Natural killer cell (primary cell): ENCODE measurements at regions of chr2 and their contacts with region 1.

Region 1: GRCh38 chr2:204177977-204178540 is 241.5 kb downstream of the ICOS start:
- DNase-seq: peak; percentile 41 to 77
- ATAC-seq: peak; percentile 49 to 73 (median 55)
- H3K4me3 ChIP-seq: no peak overlapping the region
- H3K4me3 Mint-ChIP-seq: no peak overlapping the region
- H3K27ac ChIP-seq: no peak overlapping the region
- H3K27ac Mint-ChIP-seq: no peak overlapping the region
- H3K4me1 ChIP-seq: no peaks in the 10 kb centered on the region
- H3K4me1 Mint-ChIP-seq: no peaks in the 10 kb centered on the region
- H3K27me3 ChIP-seq: no peaks in the 10 kb centered on the region
- H3K27me3 Mint-ChIP-seq: peaks cover 8 to 51% of the 10 kb centered on the region in 2 donors
- CTCF ChIP-seq: peak; percentile 75

Region 2: DNA sequence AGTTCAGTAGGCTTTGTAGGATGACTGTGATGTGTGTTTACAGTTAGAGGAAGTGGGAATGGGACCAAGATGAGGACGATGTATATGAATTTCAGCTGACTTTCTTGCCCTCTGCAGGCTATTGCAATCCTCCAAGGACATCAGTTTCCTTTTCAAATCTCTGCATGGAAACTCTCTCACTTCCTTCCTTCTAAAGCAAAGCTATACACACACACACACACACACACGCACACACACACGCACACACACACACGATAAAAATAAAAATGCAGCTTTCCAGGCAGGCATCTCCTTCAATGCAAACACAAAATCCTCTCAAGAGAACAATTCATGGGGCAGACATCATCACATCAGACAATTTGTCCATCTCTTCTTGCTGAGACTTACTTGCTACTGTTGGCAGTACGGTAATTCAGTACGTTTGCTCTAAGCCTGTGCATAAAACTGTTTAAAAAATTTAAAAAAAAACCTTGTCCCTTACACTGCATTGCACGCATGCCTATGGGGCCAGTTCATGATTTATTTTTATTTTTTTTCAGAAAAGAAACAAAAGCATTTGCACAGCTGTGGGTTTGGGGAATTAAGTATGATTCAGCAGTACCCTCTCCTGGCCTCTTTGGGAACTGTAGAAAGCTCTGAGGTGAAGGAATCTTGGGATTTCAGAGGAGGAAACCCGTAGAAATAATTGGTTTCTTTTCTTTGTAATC is 268.6 kb before region 1 on chr2:
- intact Hi-C with region 1: no loop called
- DNase-seq: peak in 1 of 2 donors; percentile 69
- ATAC-seq: peak in 2 of 3 donors; percentile 27 to 49
- H3K4me3 ChIP-seq: no peak overlapping the region
- H3K4me3 Mint-ChIP-seq: no peak overlapping the region
- H3K27ac ChIP-seq: no peak overlapping the region
- H3K27ac Mint-ChIP-seq: no peak overlapping the region
- H3K4me1 ChIP-seq: peaks cover 7% of the 10 kb centered on the region
- H3K4me1 Mint-ChIP-seq: peaks cover 4 to 11% of the 10 kb centered on the region in 2 donors
- H3K27me3 ChIP-seq: no peaks in the 10 kb centered on the region
- H3K27me3 Mint-ChIP-seq: peaks cover 6 to 7% of the 10 kb centered on the region in 2 donors
- CTCF ChIP-seq: peak; percentile 32

Region 3: GRCh38 chr2:204145263-204145751 is 32.8 kb before region 1 on chr2:
- intact Hi-C with region 1: loop called (anchors 1 kb)
- DNase-seq: peak; percentile 61 to 86
- ATAC-seq: peak; percentile 91 to 99 (median 98)
- H3K4me3 ChIP-seq: peak overlapping the region; percentile 19
- H3K4me3 Mint-ChIP-seq: peak overlapping the region; percentile 86
- H3K27ac ChIP-seq: no peak overlapping the region
- H3K27ac Mint-ChIP-seq: peak overlapping the region in 1 of 2 donors; percentile 45
- H3K4me1 ChIP-seq: peaks cover 5% of the 10 kb centered on the region
- H3K4me1 Mint-ChIP-seq: peaks cover 11 to 12% of the 10 kb centered on the region in 2 donors
- H3K27me3 ChIP-seq: no peaks in the 10 kb centered on the region
- H3K27me3 Mint-ChIP-seq: peaks cover 23 to 46% of the 10 kb centered on the region in 2 donors
- CTCF ChIP-seq: peak; percentile 98

Region 4: DNA sequence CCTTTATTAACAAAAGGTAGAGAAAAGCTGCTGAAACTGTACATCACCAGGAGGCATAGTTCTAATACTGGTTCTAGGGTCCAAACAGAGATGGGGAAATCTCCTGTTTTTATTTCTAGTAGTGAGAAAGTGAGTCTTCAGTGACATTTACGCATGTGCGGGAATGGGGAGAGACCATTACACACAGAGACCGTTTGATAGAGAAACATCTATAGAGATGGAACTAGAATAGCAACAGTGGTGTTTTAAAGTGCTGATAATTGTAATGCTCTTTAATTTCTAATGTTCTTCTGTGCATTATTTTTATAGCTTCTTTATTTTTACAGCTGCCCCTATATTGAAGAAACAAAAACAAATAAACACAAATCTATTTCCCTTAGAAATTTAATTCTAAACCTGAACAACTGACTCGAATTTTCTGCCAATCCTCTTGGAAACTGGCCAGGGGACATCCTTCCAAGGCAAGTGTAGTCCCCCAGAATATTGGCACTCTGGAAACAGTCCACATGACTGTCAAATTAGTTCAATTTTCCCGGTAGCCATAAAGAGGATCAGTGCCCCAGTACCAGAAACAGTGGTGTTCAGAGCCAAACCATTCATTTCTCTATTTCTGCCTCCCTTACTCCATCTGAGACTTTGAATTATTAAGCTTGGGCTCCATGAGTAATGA is 19.4 kb after region 1 on chr2:
- intact Hi-C with region 1: no loop called
- DNase-seq: no peak
- ATAC-seq: no peak
- H3K4me3 ChIP-seq: no peak overlapping the region
- H3K4me3 Mint-ChIP-seq: no peak overlapping the region
- H3K27ac ChIP-seq: no peak overlapping the region
- H3K27ac Mint-ChIP-seq: no peak overlapping the region
- H3K4me1 ChIP-seq: no peaks in the 10 kb centered on the region
- H3K4me1 Mint-ChIP-seq: no peaks in the 10 kb centered on the region
- H3K27me3 ChIP-seq: no peaks in the 10 kb centered on the region
- H3K27me3 Mint-ChIP-seq: peaks cover 16 to 40% of the 10 kb centered on the region in 2 donors
- CTCF ChIP-seq: no peak